Activated CD8-positive, alpha-beta memory T cell treated with anti-CD3 and anti-CD28 coated beads, Interleukin-2, amount 10 ng/mL, durations not matched to agents 7 days and 5 days (primary cell): ENCODE measurements at regions of chr3 and their contacts with region 1.

Region 1: GRCh38 chr3:128133273-128134084 is 9.9 kb upstream of the RUVBL1 start:
- DNase-seq: peak; percentile 66
- ATAC-seq: peak; percentile 86
- H3K4me3 Mint-ChIP-seq: no peak overlapping the region
- H3K27ac Mint-ChIP-seq: no peak overlapping the region
- H3K4me1 Mint-ChIP-seq: no peaks in the 10 kb centered on the region
- H3K27me3 Mint-ChIP-seq: peaks cover 28% of the 10 kb centered on the region

Region 2: DNA sequence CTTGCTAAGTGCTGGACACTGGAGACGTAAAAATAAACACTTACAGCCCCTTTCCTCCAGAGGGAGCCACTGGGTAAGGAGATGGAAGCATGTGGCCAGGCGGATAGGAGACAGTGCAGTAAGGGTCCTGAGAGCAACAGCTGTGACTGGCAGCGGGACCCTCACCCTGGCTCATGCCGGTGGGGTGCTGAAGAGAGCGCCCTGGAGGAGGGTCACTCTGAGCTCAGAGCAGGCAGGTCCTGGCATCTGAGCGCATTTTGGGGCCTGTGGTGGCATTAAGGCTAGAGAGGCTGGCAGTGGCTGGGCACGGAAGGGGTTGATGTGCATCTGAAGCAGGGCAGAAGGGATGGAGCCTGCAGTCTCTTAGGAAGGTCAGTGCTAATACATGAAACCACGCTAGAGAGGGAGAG is 65.3 kb before region 1 on chr3:
- CTCF ChIA-PET with region 1: interaction called, 13 read pairs
- DNase-seq: no peak
- ATAC-seq: peak; percentile 57
- H3K4me3 Mint-ChIP-seq: no peak overlapping the region
- H3K27ac Mint-ChIP-seq: no peak overlapping the region
- H3K4me1 Mint-ChIP-seq: no peaks in the 10 kb centered on the region
- H3K27me3 Mint-ChIP-seq: no peaks in the 10 kb centered on the region

Region 3: GRCh38 chr3:128075516-128076482 is 57.7 kb before region 1 on chr3:
- CTCF ChIA-PET with region 1: interaction called, 20 read pairs
- DNase-seq: peak; percentile 84
- ATAC-seq: peak; percentile 88
- H3K4me3 Mint-ChIP-seq: peak overlapping the region; percentile 5
- H3K27ac Mint-ChIP-seq: no peak overlapping the region
- H3K4me1 Mint-ChIP-seq: peaks cover 19% of the 10 kb centered on the region
- H3K27me3 Mint-ChIP-seq: no peaks in the 10 kb centered on the region

Region 4: GRCh38 chr3:128084391-128084963 is 49.0 kb before region 1 on chr3:
- CTCF ChIA-PET with region 1: interaction called, 15 read pairs
- DNase-seq: no peak
- ATAC-seq: no peak
- H3K4me3 Mint-ChIP-seq: no peak overlapping the region
- H3K27ac Mint-ChIP-seq: no peak overlapping the region
- H3K4me1 Mint-ChIP-seq: peaks cover 7% of the 10 kb centered on the region
- H3K27me3 Mint-ChIP-seq: no peaks in the 10 kb centered on the region

Region 5: GRCh38 chr3:128095222-128095703 is 38.2 kb before region 1 on chr3:
- CTCF ChIA-PET with region 1: interaction called, 120 read pairs
- DNase-seq: peak; percentile 87
- ATAC-seq: peak; percentile 99
- H3K4me3 Mint-ChIP-seq: no peak overlapping the region
- H3K27ac Mint-ChIP-seq: peak overlapping the region; percentile 69
- H3K4me1 Mint-ChIP-seq: peaks cover 24% of the 10 kb centered on the region
- H3K27me3 Mint-ChIP-seq: no peaks in the 10 kb centered on the region

Region 6: GRCh38 chr3:128112357-128112968 is 21.0 kb before region 1 on chr3:
- CTCF ChIA-PET with region 1: interaction called, 10 read pairs
- DNase-seq: peak; percentile 82
- ATAC-seq: peak; percentile 88
- H3K4me3 Mint-ChIP-seq: peak overlapping the region; percentile 41
- H3K27ac Mint-ChIP-seq: peak overlapping the region; percentile 97
- H3K4me1 Mint-ChIP-seq: peaks cover 40% of the 10 kb centered on the region
- H3K27me3 Mint-ChIP-seq: no peaks in the 10 kb centered on the region